ENCODE measurements at regions of chr20 and their contacts with region 1.

Region 1: DNA sequence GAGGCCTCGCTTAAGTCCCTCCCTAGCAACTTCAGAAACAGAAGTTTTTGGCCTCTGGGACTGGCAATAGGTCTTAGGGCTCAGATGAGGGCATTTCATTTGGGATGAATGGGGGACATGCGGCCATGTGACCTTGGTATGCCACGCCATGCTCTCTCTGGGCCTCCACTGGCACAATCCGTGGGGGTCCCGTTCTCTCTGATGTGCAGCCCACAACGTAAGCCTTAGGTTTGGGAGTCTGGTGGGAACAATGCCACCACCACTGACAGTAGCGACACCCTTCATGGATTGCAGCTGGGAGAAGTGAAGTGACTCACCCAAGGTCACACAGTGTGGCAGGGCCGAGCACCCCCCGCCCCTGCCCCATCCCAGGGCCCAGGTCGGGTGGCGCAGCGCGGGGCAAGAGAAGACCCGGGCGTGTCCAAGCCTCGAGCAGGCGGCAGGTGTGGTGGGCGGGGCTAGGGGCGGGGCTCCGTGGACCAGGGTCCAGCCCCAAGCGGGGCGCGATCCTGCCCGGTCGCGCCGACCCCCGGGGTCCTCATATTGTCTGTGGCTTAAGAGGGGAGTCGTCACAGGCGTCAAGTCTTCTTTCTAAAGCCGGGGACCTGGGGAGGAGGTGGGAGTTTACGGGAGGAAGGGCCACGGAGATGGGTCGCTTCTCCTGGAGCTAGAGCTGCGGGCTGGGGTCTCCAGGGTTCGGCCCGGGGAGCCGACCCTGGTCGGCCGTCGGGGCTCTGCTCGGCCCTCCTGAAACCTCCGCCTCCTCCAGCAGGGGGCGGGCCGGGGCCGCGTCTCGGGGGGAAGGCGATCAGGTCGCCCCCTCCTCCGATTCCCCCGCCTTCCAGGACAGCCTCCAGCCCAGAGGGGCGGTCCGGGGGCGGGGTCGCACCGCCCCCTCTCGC is 698 bp upstream of the CEBPB start:
- DNase-seq: peak; percentile 57
- ATAC-seq: peak; percentile 64
- H3K4me3 ChIP-seq: peak overlapping the region; percentile 68 to 91
- H3K27ac ChIP-seq: peak overlapping the region; percentile 85; the same call in 1 of the 2 replicates
- H3K4me1 ChIP-seq: peaks cover 38 to 60% of the 10 kb centered on the region in 2 experiments
- H3K27me3 ChIP-seq: no peaks in the 10 kb centered on the region
- CTCF ChIP-seq: peak in 2 of 3 experiments; percentile 54 to 60; a peak in 4 of 6 replicates
- POLR2A ChIP-seq: no peak
- RAD21 ChIP-seq: no peak

Region 2: GRCh38 chr20:50285376-50286173 is 95.6 kb after region 1 on chr20:
- CTCF ChIA-PET with region 1: no interaction called
- POLR2A ChIA-PET with region 1: interaction called, 8 read pairs
- RAD21 ChIA-PET with region 1: interaction called in 1 of 2 experiments, 9 read pairs
- intact Hi-C with region 1: loop called (anchors 5 kb)
- DNase-seq: no peak
- ATAC-seq: no peak
- H3K4me3 ChIP-seq: peak overlapping the region in 1 of 2 experiments; percentile 34; a peak in 1 of 4 replicates
- H3K27ac ChIP-seq: peak overlapping the region; percentile 91
- H3K4me1 ChIP-seq: peaks cover 49 to 68% of the 10 kb centered on the region in 2 experiments
- H3K27me3 ChIP-seq: no peaks in the 10 kb centered on the region
- CTCF ChIP-seq: no peak
- POLR2A ChIP-seq: no peak
- RAD21 ChIP-seq: no peak

Region 3: DNA sequence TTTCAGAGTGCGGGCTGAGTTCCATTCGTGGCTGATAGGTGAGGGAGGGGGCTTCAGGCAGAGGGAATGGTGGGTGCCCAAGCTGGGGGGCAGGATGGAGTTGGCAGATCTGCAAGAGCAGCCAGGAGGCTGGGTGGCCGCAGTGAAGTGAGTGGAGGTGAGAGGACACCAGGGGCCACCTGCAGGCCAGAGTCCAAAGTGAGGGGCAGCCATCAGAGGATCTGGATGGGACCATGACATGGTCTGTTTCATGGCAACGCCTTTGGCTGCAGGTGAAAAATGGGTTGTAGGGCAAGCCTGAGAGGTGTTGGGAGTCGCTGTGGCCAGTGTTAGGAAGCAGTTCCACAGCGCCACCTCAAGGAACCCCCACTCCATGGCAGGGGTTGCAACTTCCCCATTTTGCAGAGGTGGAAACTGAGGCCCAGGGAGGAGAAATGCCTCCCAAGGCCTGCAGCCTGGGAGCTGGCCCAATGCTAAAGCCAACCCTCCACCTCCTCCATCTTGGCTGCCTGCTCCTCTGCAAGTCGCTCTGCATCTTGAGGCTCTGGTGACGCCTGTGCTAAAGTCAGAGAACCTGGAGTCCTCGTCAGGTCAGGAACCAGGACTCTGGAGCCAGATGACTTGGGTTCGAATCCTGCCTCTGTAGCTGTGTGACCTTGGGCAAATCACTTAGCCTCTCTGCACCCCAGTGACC is 154.4 kb after region 1 on chr20:
- CTCF ChIA-PET with region 1: no interaction called
- POLR2A ChIA-PET with region 1: no interaction called
- RAD21 ChIA-PET with region 1: no interaction called
- intact Hi-C with region 1: loop called (anchors 5 kb)
- DNase-seq: no peak
- ATAC-seq: peak; percentile 60
- H3K4me3 ChIP-seq: no peak overlapping the region
- H3K27ac ChIP-seq: no peak overlapping the region
- H3K4me1 ChIP-seq: peaks cover 6 to 12% of the 10 kb centered on the region in 2 experiments; a peak in 2 of 4 replicates
- H3K27me3 ChIP-seq: no peaks in the 10 kb centered on the region
- CTCF ChIP-seq: peak; percentile 45 to 50 (median 46); a peak in 5 of 6 replicates
- POLR2A ChIP-seq: no peak
- RAD21 ChIP-seq: peak; percentile 65

Region 4: GRCh38 chr20:50380641-50381040 is 190.7 kb after region 1 on chr20:
- CTCF ChIA-PET with region 1: no interaction called
- POLR2A ChIA-PET with region 1: no interaction called
- RAD21 ChIA-PET with region 1: no interaction called
- intact Hi-C with region 1: loop called (anchors 1 kb)
- DNase-seq: no peak
- ATAC-seq: peak; percentile 82
- H3K4me3 ChIP-seq: no peak overlapping the region
- H3K27ac ChIP-seq: no peak overlapping the region
- H3K4me1 ChIP-seq: peaks cover 14 to 24% of the 10 kb centered on the region in 2 experiments
- H3K27me3 ChIP-seq: no peaks in the 10 kb centered on the region
- CTCF ChIP-seq: peak; percentile 63 to 66 (median 65); a peak in 5 of 6 replicates
- POLR2A ChIP-seq: no peak
- RAD21 ChIP-seq: peak; percentile 81

Region 5: GRCh38 chr20:50460460-50461267 is 270.7 kb after region 1 on chr20:
- CTCF ChIA-PET with region 1: interaction called, 61 read pairs
- POLR2A ChIA-PET with region 1: interaction called, 10 read pairs
- RAD21 ChIA-PET with region 1: interaction called, 6 to 8 read pairs
- intact Hi-C with region 1: loop called (anchors 1 kb)
- DNase-seq: peak; percentile 69
- ATAC-seq: peak; percentile 92
- H3K4me3 ChIP-seq: no peak overlapping the region
- H3K27ac ChIP-seq: peak overlapping the region; percentile 10; the same call in 1 of the 2 replicates
- H3K4me1 ChIP-seq: peaks cover 4 to 25% of the 10 kb centered on the region in 2 experiments; a peak in 3 of 4 replicates
- H3K27me3 ChIP-seq: no peaks in the 10 kb centered on the region
- CTCF ChIP-seq: peak; percentile 92 to 93 (median 92)
- POLR2A ChIP-seq: no peak
- RAD21 ChIP-seq: peak; percentile 99

Region 6: DNA sequence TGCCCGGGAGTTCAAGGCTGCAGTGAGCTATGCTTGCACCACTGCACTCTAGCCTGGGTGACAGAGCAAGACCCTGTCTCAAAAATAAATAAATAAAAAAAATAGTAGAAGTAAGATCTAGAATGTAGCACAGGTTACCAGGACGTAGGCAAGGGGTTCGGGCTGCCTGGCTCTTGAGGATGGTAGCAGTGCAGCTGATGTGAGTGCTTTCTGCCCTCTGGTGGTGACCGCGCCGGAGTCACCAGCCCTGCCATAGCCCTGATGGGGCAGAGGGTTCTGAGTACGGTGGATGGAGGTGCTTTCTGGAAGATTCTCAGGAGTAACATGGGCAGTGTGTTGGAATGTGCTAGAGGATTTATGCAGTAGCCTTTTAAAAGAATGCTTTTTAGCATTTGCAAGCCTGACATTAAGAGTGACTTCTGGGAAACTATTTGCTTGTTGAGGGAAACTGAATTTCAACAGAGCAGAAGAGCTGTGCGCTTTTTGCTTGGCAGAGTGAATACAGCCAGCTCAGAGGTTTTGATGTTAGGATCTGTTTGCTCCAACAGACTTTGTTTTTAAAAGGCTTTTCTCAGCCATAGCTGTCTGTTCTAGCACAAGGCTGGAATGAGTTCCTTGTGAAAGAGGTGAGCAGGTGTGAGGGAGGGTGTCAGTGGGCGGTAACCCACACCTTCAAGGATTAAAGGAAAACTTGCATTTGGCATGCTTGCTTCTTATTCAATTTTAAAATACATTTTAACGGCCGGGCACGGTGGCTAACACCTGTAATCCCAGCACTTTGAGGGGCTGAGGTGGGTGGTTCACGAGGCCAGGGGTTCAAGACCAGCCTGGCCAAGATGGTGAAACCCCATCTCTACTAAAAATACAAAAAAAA is 386.2 kb after region 1 on chr20:
- CTCF ChIA-PET with region 1: interaction called, 7 read pairs
- POLR2A ChIA-PET with region 1: no interaction called
- RAD21 ChIA-PET with region 1: no interaction called
- intact Hi-C with region 1: loop called (anchors 1 kb)
- DNase-seq: peak; percentile 22
- ATAC-seq: peak; percentile 92
- H3K4me3 ChIP-seq: no peak overlapping the region
- H3K27ac ChIP-seq: no peak overlapping the region
- H3K4me1 ChIP-seq: peaks cover 6 to 18% of the 10 kb centered on the region in 2 experiments; a peak in 2 of 4 replicates
- H3K27me3 ChIP-seq: no peaks in the 10 kb centered on the region
- CTCF ChIP-seq: peak; percentile 69 to 82 (median 78)
- POLR2A ChIP-seq: no peak
- RAD21 ChIP-seq: peak; percentile 85